ENCODE measurements at regions of chrX and their contacts with region 1.

Region 1: DNA sequence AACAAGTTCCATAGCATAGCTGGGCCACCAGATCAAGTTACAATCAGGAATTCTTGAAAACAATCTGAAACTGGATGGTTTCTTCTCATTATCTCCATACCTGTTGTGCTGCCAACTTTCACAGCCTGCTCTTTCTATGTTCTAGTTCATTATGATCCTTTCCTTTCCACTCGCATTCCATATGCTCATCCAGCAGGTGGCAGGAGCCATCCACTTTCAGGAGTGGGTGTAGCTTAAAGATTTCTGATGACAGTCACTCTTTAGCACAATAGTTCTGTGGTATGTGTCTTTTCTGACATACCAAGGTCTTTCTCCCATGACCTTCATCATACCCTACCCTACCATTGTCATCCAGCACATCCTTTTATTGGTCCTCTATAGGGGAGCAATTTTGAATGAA is 46.4 kb downstream of the PAGE2 start:
- DNase-seq: peak in 1 of 2 donors; percentile 45
- ATAC-seq: no peak
- H3K4me3 ChIP-seq: no peak overlapping the region
- H3K27ac ChIP-seq: no peak overlapping the region
- H3K4me1 ChIP-seq: no peaks in the 10 kb centered on the region
- H3K27me3 ChIP-seq: no peaks in the 10 kb centered on the region

Region 2: GRCh38 chrX:54950730-54951375 is 184.3 kb before region 1 on chrX:
- intact Hi-C with region 1: no loop called
- DNase-seq: no peak
- ATAC-seq: no peak
- H3K4me3 ChIP-seq: no peak overlapping the region
- H3K27ac ChIP-seq: no peak overlapping the region
- H3K4me1 ChIP-seq: no peaks in the 10 kb centered on the region
- H3K27me3 ChIP-seq: no peaks in the 10 kb centered on the region

Region 3: DNA sequence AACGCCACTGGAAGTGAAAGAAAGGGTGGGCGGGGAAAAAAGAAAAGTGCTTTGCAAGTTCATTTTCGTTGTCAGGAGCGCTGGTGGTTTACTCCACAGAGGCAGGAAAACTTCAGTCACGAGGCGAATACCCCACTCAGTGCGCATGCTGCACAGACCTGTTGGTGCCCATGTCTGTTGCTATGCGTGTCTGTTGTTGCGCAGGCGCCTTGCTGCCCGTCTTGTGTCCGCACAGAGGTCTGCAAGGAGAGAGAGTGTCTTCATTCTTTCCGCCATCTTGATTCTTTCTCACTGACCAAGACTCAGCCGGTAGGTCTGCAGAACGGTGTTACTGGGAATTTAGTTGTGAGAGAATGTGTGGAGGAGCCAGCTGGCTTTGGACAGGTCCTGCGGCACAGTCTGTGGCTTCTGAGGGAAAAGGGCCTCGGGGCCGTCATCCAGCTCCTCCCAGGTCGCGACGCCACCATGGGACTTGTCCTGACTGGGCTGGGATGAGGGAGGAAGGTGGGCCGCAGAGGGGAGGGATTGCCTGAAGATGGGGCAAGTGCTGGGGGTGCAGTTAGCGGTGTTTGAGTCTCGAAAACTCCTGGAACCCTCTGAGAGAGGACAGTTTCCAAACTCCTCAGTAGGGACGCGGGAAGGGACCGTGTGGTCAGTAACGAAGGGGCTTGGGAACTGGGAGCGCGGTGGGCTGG is 46.2 kb before region 1 on chrX and contains the start of gene PAGE2:
- intact Hi-C with region 1: no loop called
- DNase-seq: no peak
- ATAC-seq: no peak
- H3K4me3 ChIP-seq: no peak within 1 kb of the TSS
- H3K27ac ChIP-seq: no peak within 1 kb of the TSS
- H3K4me1 ChIP-seq: no peaks in the 10 kb centered on the region
- H3K27me3 ChIP-seq: no peaks in the 10 kb centered on the region
- total RNA-seq, gene PAGE2: not detected

Region 4: DNA sequence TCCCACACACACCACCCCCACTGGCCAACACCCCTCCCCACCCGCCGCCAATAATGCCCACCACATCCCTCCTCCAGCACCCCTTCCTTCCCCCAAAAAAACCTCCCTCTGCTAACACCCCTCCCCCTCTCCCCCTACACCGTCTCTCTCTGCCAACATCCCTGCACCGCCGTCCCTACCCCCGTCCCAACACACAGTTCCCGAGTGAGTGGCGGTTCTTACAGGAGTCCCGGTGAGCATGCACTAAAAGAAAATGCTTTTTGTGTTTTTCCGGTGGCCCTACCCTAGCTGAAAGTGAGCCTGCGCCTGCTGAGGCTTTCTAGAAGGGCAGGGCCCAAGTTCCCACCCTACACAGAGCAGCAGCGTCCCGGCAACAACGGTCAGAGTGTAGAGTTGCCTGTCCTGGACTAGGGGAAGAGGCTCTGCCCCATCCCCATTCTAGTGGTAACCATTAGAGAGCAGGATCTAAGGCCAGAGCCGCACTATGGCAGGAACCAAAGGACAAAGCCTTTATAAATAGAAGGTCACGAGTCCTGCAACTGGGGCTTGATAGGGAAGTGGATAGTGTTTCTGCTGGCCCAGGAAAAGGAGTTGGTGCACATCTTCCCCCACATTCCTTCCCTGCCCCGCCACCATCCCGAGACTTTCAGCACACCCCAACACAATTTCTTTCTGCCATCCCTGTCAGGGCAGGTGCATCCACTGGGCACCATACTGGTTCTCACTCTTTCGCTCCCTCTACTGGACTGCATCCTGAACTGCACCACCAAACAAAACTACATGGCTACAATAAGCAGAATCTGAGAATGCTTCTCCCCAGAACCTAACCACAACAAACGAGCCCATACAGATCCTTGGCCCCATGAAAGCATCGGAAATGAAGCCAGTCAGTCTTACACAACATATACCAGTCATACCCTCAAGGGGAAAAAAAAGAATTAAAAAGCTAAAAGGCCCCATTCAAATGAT is 207.6 kb after region 1 on chrX:
- intact Hi-C with region 1: loop called in 1 of 2 experiments (anchors 10 kb)
- DNase-seq: no peak
- ATAC-seq: peak; percentile 48
- H3K4me3 ChIP-seq: no peak overlapping the region
- H3K27ac ChIP-seq: no peak overlapping the region
- H3K4me1 ChIP-seq: no peaks in the 10 kb centered on the region
- H3K27me3 ChIP-seq: no peaks in the 10 kb centered on the region